ENCODE measurements at regions of chr12 and their contacts with region 1.

Region 1: GRCh38 chr12:112439769-112440168 is 21.0 kb downstream of the PTPN11 start:
- DNase-seq: no peak
- H3K4me3 ChIP-seq: no peak overlapping the region
- H3K27ac ChIP-seq: no peak overlapping the region
- H3K4me1 ChIP-seq: peaks cover 14% of the 10 kb centered on the region
- H3K27me3 ChIP-seq: no peaks in the 10 kb centered on the region
- CTCF ChIP-seq: no peak

Region 2: DNA sequence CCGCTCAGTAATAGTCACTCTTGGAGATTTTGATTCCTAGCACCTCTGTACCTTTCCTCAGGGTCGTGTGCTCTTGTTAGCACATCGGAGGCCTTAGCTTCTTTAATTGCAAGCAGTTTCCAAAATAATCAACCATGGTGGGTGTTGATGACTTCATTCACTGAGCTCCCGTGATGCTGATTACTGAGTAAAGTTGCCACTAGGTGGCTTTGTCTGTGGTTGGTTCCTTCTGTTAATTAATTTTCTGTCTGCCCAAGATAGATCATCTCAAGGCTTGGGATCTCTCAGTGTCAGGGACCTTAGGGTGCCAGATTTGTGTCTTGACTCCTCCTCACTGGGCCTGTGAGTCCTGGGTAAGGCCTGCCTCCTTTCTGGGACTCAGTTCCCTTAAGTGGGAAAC is 33.3 kb after region 1 on chr12:
- CTCF ChIA-PET with region 1: interaction called, 10 read pairs
- POLR2A ChIA-PET with region 1: no interaction called
- intact Hi-C with region 1: no loop called
- DNase-seq: peak; percentile 43
- H3K4me3 ChIP-seq: no peak overlapping the region
- H3K27ac ChIP-seq: no peak overlapping the region
- H3K4me1 ChIP-seq: no peaks in the 10 kb centered on the region
- H3K27me3 ChIP-seq: no peaks in the 10 kb centered on the region
- CTCF ChIP-seq: peak; percentile 52

Region 3: DNA sequence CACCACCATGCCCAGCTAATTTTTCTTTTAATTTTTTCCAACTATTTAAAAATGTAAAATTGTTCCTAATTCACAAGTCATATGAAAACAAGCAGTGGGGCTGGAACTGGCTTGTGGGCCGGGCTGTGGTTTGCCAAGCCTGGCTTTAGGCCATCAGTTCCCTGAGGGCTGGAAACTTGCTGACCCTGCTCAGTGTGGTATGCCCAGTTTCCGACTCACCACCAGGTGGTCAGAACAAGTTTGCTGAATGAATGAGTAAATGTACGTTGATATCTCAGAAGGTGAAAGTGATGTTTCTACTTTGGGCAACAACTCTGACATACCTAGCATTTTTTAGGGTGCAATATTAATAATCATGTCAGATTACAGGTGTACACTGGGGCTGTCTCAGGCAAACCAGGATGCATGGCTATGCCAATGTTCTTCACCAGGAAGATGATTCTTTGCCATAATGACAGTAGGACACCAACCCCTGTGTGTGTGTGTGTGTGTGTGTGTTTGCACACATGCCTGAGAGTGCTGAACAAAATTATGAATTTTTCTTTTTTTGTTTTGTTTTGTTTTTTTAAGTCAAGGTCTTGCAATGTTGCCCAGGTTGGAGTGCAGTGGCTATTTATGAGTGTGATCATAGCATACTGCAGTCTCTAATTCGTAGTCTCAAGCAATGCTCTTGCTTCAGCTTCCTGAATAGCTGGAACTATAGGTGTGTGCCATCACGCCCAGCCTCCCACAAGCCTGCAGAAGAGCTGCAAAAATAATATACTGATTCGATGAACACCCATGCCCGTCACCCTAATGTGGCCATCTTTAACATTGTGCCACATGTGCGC is 85.1 kb after region 1 on chr12:
- CTCF ChIA-PET with region 1: no interaction called
- POLR2A ChIA-PET with region 1: no interaction called
- intact Hi-C with region 1: no loop called
- DNase-seq: no peak
- H3K4me3 ChIP-seq: no peak overlapping the region
- H3K27ac ChIP-seq: no peak overlapping the region
- H3K4me1 ChIP-seq: no peaks in the 10 kb centered on the region
- H3K27me3 ChIP-seq: no peaks in the 10 kb centered on the region
- CTCF ChIP-seq: no peak

Measured in A673 (cell line).